B cell (primary cell): ENCODE measurements at regions of chr11 and their contacts with region 1.

Region 1: GRCh38 chr11:65593518-65594298 is 1.9 kb downstream of the KCNK7 start:
- DNase-seq: peak; percentile 66
- ATAC-seq: peak; percentile 48
- H3K4me3 ChIP-seq: no peak overlapping the region
- H3K4me3 Mint-ChIP-seq: no peak overlapping the region
- H3K27ac ChIP-seq: no peak overlapping the region
- H3K27ac Mint-ChIP-seq: peak overlapping the region; percentile 46
- H3K4me1 ChIP-seq: peaks cover 14 to 30% of the 10 kb centered on the region in 2 donors
- H3K4me1 Mint-ChIP-seq: peaks cover 24% of the 10 kb centered on the region
- H3K27me3 ChIP-seq: no peaks in the 10 kb centered on the region
- H3K27me3 Mint-ChIP-seq: no peaks in the 10 kb centered on the region
- CTCF ChIP-seq: peak; percentile 74

Region 2: DNA sequence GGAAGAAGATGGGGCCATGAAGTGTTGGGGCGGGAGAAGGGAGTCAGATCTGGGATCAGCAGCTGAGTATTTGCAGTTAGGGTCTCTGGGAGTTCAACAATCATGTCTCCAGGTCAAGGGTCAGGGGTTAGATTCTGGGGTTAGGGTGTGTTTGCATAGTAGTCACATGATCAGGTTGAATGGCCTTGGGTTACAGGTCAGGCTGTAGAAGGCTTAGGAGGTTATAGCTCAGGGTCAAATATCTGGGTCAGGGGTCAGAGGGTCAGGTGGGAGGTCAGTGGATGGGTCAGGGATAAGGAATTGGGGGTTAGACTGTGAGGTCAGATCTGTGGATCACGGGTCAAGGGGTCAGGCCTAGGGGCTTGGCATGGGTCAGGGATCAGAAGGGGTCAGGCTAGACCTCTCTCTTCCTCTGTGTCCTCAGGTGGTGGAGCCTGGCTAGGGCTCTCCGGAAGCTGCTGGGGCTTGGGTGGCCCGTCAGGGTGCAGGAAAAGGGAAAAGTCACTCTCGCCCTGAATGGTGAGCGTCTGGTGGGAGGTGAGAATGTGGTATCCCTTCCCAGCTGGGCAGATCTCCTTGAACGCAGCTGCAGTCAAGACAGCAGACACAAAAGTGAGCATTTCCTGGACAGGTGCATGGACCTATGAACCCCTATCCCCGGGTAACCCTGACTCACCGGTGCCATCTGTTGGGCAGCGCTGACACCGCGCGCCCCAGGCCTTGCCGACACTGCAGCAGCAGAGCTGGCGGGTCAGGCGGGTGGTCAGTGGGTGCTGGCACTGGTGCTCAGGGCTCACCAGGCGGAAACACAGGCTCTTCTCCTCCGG is 41.9 kb before region 1 on chr11:
- CTCF ChIA-PET with region 1: interaction called, 144 read pairs
- POLR2A ChIA-PET with region 1: no interaction called
- intact Hi-C with region 1: loop called (anchors 1 kb)
- DNase-seq: peak; percentile 85
- ATAC-seq: peak; percentile 85
- H3K4me3 ChIP-seq: no peak overlapping the region
- H3K4me3 Mint-ChIP-seq: peak overlapping the region; percentile 61
- H3K27ac ChIP-seq: no peak overlapping the region
- H3K27ac Mint-ChIP-seq: peak overlapping the region; percentile 89
- H3K4me1 ChIP-seq: peaks cover 42 to 64% of the 10 kb centered on the region in 2 donors
- H3K4me1 Mint-ChIP-seq: peaks cover 66% of the 10 kb centered on the region
- H3K27me3 ChIP-seq: no peaks in the 10 kb centered on the region
- H3K27me3 Mint-ChIP-seq: no peaks in the 10 kb centered on the region
- CTCF ChIP-seq: peak; percentile 76

Region 3: GRCh38 chr11:65575568-65576231 is 18.0 kb before region 1 on chr11 and contains the start of gene EHBP1L1:
- CTCF ChIA-PET with region 1: interaction called, 97 read pairs
- POLR2A ChIA-PET with region 1: interaction called, 45 read pairs
- intact Hi-C with region 1: loop called (anchors 1 kb)
- DNase-seq: peak; percentile 82
- ATAC-seq: peak; percentile 39
- H3K4me3 ChIP-seq: peak within 1 kb of the TSS; percentile 55 to 92 (median 70)
- H3K4me3 Mint-ChIP-seq: peak within 1 kb of the TSS; percentile 98
- H3K27ac ChIP-seq: peak within 1 kb of the TSS; percentile 92 to 94
- H3K27ac Mint-ChIP-seq: peak within 1 kb of the TSS; percentile 98
- H3K4me1 ChIP-seq: peaks cover 41 to 62% of the 10 kb centered on the region in 2 donors
- H3K4me1 Mint-ChIP-seq: peaks cover 61% of the 10 kb centered on the region
- H3K27me3 ChIP-seq: no peaks in the 10 kb centered on the region
- H3K27me3 Mint-ChIP-seq: no peaks in the 10 kb centered on the region
- CTCF ChIP-seq: no peak
- total RNA-seq, gene EHBP1L1: 202 and 224 TPM in 2 replicates

Region 4: DNA sequence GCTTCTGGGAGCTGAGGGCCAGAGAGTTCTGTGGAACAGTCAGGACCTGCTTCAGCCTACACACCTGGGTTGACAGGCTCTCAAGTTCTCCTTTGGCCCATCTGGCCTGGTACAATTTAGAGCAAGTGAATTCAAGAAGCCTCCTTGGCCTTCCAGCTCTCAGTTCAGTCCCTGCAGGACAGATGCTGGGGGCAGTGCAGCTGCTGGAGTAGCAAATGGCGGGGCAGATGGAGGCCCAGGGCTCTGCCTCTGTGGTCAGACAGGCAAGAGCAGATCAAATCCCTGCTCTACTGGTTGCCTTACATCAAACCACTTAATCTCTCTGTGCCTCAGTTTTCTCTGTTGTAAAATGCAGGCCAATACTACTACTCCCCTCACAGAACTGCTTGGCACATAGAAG is 10.6 kb after region 1 on chr11:
- CTCF ChIA-PET with region 1: interaction called, 13 read pairs
- POLR2A ChIA-PET with region 1: interaction called, 5 read pairs
- intact Hi-C with region 1: no loop called
- DNase-seq: no peak
- ATAC-seq: no peak
- H3K4me3 ChIP-seq: no peak overlapping the region
- H3K4me3 Mint-ChIP-seq: no peak overlapping the region
- H3K27ac ChIP-seq: no peak overlapping the region
- H3K27ac Mint-ChIP-seq: no peak overlapping the region
- H3K4me1 ChIP-seq: peaks cover 11% of the 10 kb centered on the region in 2 donors
- H3K4me1 Mint-ChIP-seq: peaks cover 21% of the 10 kb centered on the region
- H3K27me3 ChIP-seq: no peaks in the 10 kb centered on the region
- H3K27me3 Mint-ChIP-seq: no peaks in the 10 kb centered on the region
- CTCF ChIP-seq: no peak

Region 5: GRCh38 chr11:65834202-65834601 is 240.5 kb after region 1 on chr11:
- CTCF ChIA-PET with region 1: no interaction called
- POLR2A ChIA-PET with region 1: no interaction called
- intact Hi-C with region 1: no loop called
- DNase-seq: no peak
- ATAC-seq: no peak
- H3K4me3 ChIP-seq: peak overlapping the region; percentile 47 to 81 (median 67)
- H3K4me3 Mint-ChIP-seq: no peak overlapping the region
- H3K27ac ChIP-seq: no peak overlapping the region
- H3K27ac Mint-ChIP-seq: no peak overlapping the region
- H3K4me1 ChIP-seq: peaks cover 13 to 21% of the 10 kb centered on the region in 2 donors
- H3K4me1 Mint-ChIP-seq: peaks cover 8% of the 10 kb centered on the region
- H3K27me3 ChIP-seq: peaks cover 0 to 4% (median 0%) of the 10 kb centered on the region in 4 experiments
- H3K27me3 Mint-ChIP-seq: no peaks in the 10 kb centered on the region
- CTCF ChIP-seq: no peak